ENCODE measurements at regions of chr11 and their contacts with region 1.

Region 1: DNA sequence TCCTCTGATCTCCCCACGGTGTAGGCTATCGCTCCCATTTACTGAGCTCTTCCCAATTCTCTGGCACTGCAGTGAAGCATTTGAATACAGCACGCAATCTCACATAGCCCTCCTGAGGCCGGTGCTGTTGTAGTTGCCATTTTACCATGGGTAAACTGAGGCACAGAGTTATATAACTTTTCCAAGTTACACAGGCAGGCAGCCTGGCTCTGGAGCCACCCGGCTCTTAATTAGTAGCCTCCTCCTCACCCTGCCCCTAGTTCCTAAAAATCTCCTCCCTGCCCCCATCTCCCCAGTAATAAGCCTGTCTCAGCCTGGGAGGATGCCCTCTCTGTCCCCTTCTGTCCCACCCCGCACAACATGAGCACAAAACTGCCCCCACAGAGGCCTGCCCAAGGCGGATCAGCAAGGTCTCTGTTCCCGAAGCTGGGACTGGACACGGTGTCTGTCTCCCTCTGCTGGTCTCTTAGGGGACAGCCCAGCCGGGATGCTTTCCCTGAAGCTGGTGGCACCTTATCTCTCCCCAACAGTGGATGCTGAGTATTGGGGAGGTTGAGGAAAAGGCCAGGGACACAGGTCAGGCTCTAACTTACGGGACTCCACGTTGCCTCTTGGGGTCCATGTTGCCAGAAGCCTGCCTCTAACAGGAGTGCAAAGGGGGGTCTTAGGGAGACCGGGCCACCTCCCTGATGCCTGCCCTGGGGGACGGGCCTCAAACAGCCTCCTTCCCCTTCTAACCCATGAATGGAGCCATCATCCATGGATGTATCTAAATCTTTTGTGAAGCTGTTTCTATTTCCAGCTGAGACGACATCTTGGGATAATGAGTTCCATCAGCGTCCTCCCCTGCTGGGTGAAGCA is 9.1 kb upstream of the CLCF1 start:
- DNase-seq: peak; percentile 80 to 97
- H3K4me3 ChIP-seq: no peak overlapping the region
- CTCF ChIP-seq: peak in 1 of 3 donors; percentile 95
- POLR2A ChIP-seq: no peak

Region 2: GRCh38 chr11:67351275-67352005 is 31.1 kb before region 1 on chr11:
- intact Hi-C with region 1: loop called (anchors 2 kb)
- DNase-seq: peak; percentile 45 to 91
- H3K4me3 ChIP-seq: no peak overlapping the region
- CTCF ChIP-seq: peak in 1 of 3 donors; percentile 87
- POLR2A ChIP-seq: no peak

Measured in lower leg skin (tissue), 4 donors.